ENCODE measurements at regions of chr4 and their contacts with region 1.

Region 1: DNA sequence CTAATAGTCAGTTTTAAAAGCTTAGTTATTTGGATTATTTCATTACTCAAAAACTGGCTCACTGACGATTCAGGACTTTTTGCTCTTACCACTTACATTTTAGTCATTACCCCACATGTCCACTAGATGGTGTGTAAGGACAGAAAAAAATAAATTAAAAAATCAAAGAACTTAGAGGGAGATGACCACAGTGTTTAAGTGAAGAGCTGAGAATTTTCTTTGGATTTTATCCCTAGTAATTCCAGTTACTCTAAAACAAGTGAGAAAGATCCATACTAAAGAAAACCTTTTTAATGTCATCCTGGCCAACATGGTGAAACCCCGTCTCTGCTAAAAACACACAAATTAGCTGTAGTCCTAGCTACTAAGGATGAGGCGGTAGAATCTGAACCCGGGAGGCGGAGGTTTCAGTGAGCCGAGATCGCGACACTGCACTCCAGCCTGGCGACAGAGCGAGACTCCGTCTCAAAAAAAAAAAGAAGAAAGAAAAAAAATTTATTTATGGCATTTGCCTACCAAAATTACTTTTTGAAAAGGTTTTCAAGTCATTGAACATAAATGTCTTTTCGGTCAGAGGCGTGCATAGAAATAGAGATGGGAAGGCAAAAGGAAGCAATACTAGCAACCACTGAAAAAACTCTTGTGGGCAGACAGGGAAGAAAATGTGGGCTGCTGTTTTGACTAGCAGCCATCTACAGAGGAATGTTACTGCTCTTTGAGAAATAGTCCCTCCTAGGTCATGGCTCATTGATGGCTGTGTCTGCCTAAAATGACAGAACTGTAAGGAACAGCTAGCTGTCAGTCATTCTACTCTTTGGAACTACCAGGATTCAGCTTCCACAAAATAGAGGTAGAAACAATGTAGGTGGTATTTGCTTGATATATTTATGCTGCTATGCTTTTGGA is 26.6 kb upstream of the TMPRSS11B start:
- DNase-seq: no peak
- H3K4me3 Mint-ChIP-seq: peak overlapping the region; percentile 30
- H3K27ac Mint-ChIP-seq: no peak overlapping the region
- H3K4me1 Mint-ChIP-seq: peaks cover 8% of the 10 kb centered on the region
- H3K27me3 Mint-ChIP-seq: peaks cover 6% of the 10 kb centered on the region

Region 2: DNA sequence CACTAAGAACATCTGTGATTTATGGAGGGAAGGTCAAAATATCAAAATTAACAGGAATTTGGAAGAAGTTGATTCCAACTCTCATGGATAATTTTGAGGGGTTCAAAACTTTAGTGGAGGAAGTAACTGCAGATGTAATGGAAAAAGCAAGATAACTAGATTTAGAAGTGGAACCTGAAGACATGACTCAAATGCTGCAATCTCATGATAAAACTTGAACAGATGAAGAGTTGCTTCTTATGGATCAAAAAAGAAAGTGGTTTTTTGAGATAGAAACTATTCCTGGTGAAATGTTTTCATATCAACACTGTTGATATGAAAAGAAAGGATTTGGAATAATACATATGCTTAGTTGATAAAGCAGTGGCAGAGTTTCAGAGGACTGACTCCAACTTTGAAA is 152.2 kb before region 1 on chr4:
- CTCF ChIA-PET with region 1: no interaction called
- intact Hi-C with region 1: no loop called
- DNase-seq: no peak
- H3K4me3 Mint-ChIP-seq: no peak overlapping the region
- H3K27ac Mint-ChIP-seq: no peak overlapping the region
- H3K4me1 Mint-ChIP-seq: no peaks in the 10 kb centered on the region
- H3K27me3 Mint-ChIP-seq: no peaks in the 10 kb centered on the region

Region 3: GRCh38 chr4:68167706-68168105 is 104.4 kb before region 1 on chr4:
- CTCF ChIA-PET with region 1: no interaction called
- intact Hi-C with region 1: no loop called
- DNase-seq: no peak
- H3K4me3 Mint-ChIP-seq: no peak overlapping the region
- H3K27ac Mint-ChIP-seq: no peak overlapping the region
- H3K4me1 Mint-ChIP-seq: no peaks in the 10 kb centered on the region
- H3K27me3 Mint-ChIP-seq: peaks cover 34% of the 10 kb centered on the region

Region 4: GRCh38 chr4:68810919-68811318 is 538.8 kb after region 1 on chr4:
- CTCF ChIA-PET with region 1: no interaction called
- intact Hi-C with region 1: no loop called
- DNase-seq: no peak
- H3K4me3 Mint-ChIP-seq: no peak overlapping the region
- H3K27ac Mint-ChIP-seq: no peak overlapping the region
- H3K4me1 Mint-ChIP-seq: no peaks in the 10 kb centered on the region
- H3K27me3 Mint-ChIP-seq: no peaks in the 10 kb centered on the region

Region 5: DNA sequence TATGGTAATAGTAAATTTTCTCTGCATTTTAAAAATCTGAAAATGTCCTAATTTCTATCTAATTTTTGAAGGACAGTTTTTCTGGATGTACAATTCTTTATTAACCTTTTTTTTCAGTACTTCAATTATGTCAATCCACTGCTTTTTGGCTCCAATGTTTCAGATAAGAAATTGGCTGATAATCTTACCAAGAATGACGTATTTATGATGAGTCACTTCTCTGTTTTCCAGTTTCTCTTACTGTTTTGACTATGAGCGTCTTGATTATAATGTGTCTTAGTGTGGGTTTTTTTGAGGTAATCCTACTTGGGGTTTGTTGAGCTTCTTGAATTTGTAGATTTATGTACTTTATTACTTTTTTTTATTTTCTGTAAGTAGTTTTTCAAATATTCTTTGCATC is 895.2 kb after region 1 on chr4:
- CTCF ChIA-PET with region 1: no interaction called
- intact Hi-C with region 1: loop called (anchors 5 kb)
- DNase-seq: no peak
- H3K4me3 Mint-ChIP-seq: no peak overlapping the region
- H3K27ac Mint-ChIP-seq: no peak overlapping the region
- H3K4me1 Mint-ChIP-seq: no peaks in the 10 kb centered on the region
- H3K27me3 Mint-ChIP-seq: no peaks in the 10 kb centered on the region

Region 6: GRCh38 chr4:69823481-69824186 is 1551.5 kb after region 1 on chr4:
- CTCF ChIA-PET with region 1: no interaction called
- intact Hi-C with region 1: loop called (anchors 5 kb)
- DNase-seq: peak; percentile 78
- H3K4me3 Mint-ChIP-seq: no peak overlapping the region
- H3K27ac Mint-ChIP-seq: no peak overlapping the region
- H3K4me1 Mint-ChIP-seq: peaks cover 6% of the 10 kb centered on the region
- H3K27me3 Mint-ChIP-seq: no peaks in the 10 kb centered on the region

Measured in activated naive CD4-positive, alpha-beta T cell treated with anti-CD3 and anti-CD28 coated beads for 36 hours (primary cell).